ENCODE measurements at regions of chr14 and their contacts with region 1.

Region 1: GRCh38 chr14:80055667-80056496 is 155.4 kb downstream of the DIO2 start:
- DNase-seq: no peak
- H3K4me3 ChIP-seq: no peak overlapping the region
- H3K27me3 ChIP-seq: no peaks in the 10 kb centered on the region
- CTCF ChIP-seq: peak; percentile 81

Region 2: DNA sequence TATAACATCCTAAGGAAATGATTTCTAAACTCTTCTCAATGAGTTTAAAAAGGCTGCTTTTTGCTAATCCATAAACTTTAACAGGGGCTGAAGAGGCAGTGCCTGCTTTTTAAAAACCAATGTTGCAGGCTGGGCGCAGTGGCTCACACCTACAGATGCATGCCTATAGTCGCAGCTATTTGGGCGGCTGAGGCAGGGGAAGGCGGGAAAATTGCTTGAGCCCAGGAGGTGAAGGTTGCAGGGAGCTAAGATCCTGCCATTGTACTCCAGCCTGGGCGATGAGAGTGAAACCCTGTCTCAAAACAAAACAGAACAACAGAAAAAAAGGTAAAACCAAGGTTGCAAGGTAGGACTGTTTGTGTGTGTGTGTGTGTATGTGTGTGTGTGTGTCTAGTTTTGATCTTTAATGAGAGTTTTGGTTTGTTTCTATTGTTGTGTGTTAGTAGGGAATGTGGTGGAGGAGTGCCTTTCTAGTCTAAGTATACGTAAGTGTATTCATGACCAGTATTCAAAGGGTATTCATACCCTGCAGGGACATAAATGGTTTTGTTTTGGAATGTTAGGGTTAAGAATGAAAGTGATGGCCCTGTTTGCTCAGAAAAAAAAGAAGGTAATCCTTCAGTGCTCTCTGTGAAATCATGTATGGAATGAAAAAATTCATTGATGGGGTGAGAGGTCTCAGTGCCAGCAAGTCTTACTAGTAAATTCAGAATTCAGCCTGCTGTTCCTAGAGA is 375.6 kb before region 1 on chr14:
- CTCF ChIA-PET with region 1: no interaction called
- POLR2A ChIA-PET with region 1: no interaction called
- DNase-seq: no peak
- H3K4me3 ChIP-seq: no peak overlapping the region
- H3K27me3 ChIP-seq: no peaks in the 10 kb centered on the region; the same call in 1 of the 2 replicates
- CTCF ChIP-seq: no peak

Region 3: GRCh38 chr14:80078501-80078900 is 22.6 kb after region 1 on chr14:
- CTCF ChIA-PET with region 1: interaction called, 12 read pairs
- POLR2A ChIA-PET with region 1: no interaction called
- DNase-seq: no peak
- H3K4me3 ChIP-seq: no peak overlapping the region
- H3K27me3 ChIP-seq: no peaks in the 10 kb centered on the region
- CTCF ChIP-seq: no peak

Region 4: GRCh38 chr14:80172375-80173051 is 116.6 kb after region 1 on chr14:
- CTCF ChIA-PET with region 1: no interaction called
- POLR2A ChIA-PET with region 1: no interaction called
- DNase-seq: no peak
- H3K4me3 ChIP-seq: no peak overlapping the region
- H3K27me3 ChIP-seq: no peaks in the 10 kb centered on the region
- CTCF ChIP-seq: no peak

Region 5: DNA sequence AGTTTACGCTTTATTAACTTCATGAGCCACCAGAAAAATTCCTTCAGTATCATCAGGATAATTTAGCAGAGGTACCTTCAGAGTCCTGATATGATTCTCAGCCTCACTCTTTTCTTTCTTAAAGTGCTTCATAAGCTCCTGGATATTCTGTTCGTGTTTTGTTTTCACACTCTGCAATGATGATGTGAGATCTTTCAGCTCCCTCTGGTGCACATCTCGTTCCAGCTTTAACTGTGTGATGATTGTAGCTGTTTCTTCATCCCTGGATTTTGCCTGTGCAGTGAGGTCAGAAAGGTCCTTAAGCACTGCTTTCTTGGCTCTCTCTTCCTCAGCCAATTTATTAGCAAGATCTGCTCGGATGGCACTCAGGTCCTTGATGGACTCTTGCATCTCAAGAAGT is 728.9 kb after region 1 on chr14:
- CTCF ChIA-PET with region 1: interaction called, 18 read pairs
- POLR2A ChIA-PET with region 1: no interaction called
- DNase-seq: peak; percentile 4
- H3K4me3 ChIP-seq: no peak overlapping the region
- H3K27me3 ChIP-seq: no peaks in the 10 kb centered on the region
- CTCF ChIP-seq: peak; percentile 46

Region 6: DNA sequence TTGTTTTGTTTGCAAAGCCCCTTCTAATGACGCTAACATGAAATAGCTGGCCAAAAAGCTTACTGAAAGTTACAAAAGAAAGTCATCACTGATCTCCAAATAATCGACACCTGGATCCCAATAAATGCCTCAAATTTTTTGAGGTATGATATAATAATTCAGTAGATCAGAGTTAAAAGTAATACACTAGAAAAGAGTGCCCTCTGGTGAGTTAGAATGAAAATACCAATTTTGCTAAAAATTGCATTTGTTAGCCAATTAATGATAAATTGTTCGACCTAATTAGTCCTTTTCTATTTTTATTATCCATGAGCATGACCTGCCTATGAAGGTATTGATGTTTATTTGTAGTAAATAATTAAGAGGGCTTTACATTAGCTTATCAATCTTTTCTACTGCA is 807.1 kb after region 1 on chr14:
- CTCF ChIA-PET with region 1: interaction called, 24 read pairs
- POLR2A ChIA-PET with region 1: no interaction called
- DNase-seq: no peak
- H3K4me3 ChIP-seq: no peak overlapping the region
- H3K27me3 ChIP-seq: no peaks in the 10 kb centered on the region
- CTCF ChIP-seq: peak; percentile 41